ENCODE measurements at regions of chr12 and their contacts with region 1.

Region 1: GRCh38 chr12:15856097-15856982 is 25.8 kb upstream of the STRAP start:
- DNase-seq: no peak
- H3K4me3 ChIP-seq: no peak overlapping the region
- H3K27me3 ChIP-seq: no peaks in the 10 kb centered on the region
- CTCF ChIP-seq: peak; percentile 62

Region 2: GRCh38 chr12:15590180-15590826 is 266.0 kb before region 1 on chr12:
- CTCF ChIA-PET with region 1: interaction called, 204 read pairs
- POLR2A ChIA-PET with region 1: no interaction called
- DNase-seq: no peak
- H3K4me3 ChIP-seq: peak overlapping the region; percentile 29
- H3K27me3 ChIP-seq: no peaks in the 10 kb centered on the region
- CTCF ChIP-seq: peak; percentile 88

Region 3: GRCh38 chr12:15650399-15651128 is 205.8 kb before region 1 on chr12:
- CTCF ChIA-PET with region 1: no interaction called
- POLR2A ChIA-PET with region 1: no interaction called
- DNase-seq: no peak
- H3K4me3 ChIP-seq: no peak overlapping the region
- H3K27me3 ChIP-seq: no peaks in the 10 kb centered on the region
- CTCF ChIP-seq: no peak

Region 4: GRCh38 chr12:15789220-15790171 is 66.8 kb before region 1 on chr12 and contains the start of gene EPS8:
- CTCF ChIA-PET with region 1: interaction called, 10 read pairs
- POLR2A ChIA-PET with region 1: no interaction called
- DNase-seq: no peak
- H3K4me3 ChIP-seq: peak within 1 kb of the TSS; percentile 96
- H3K27me3 ChIP-seq: no peaks in the 10 kb centered on the region
- CTCF ChIP-seq: peak; percentile 18; the same call in 1 of the 2 replicates
- polyA plus RNA-seq, gene EPS8: 93.3 and 118 TPM in 2 replicates

Region 5: GRCh38 chr12:15899282-15899870 is 43.0 kb after region 1 on chr12:
- CTCF ChIA-PET with region 1: interaction called, 13 read pairs
- POLR2A ChIA-PET with region 1: no interaction called
- DNase-seq: no peak
- H3K4me3 ChIP-seq: no peak overlapping the region
- H3K27me3 ChIP-seq: no peaks in the 10 kb centered on the region
- CTCF ChIP-seq: peak; percentile 55

Region 6: GRCh38 chr12:15979096-15980092 is 123.1 kb after region 1 on chr12:
- CTCF ChIA-PET with region 1: no interaction called
- POLR2A ChIA-PET with region 1: no interaction called
- DNase-seq: peak; percentile 98
- H3K4me3 ChIP-seq: no peak overlapping the region
- H3K27me3 ChIP-seq: no peaks in the 10 kb centered on the region
- CTCF ChIP-seq: peak; percentile 68